Activated T-helper 1 cell treated with anti-CD3 and anti-CD28 coated beads, Interleukin-12 subunit alpha, Interleukin-12 subunit beta, Interleukin-2, Interleukin-4 antibody, amounts not matched to agents 30 ng/mL and 10 ng/mL and 1 ng/mL, durations not matched to agents 14 hours and 24 hours and 36 hours (primary cell): ENCODE measurements at regions of chrX and their contacts with region 1.

Region 1: GRCh38 chrX:135521405-135522189 is 1.1 kb downstream of the INTS6L start:
- DNase-seq: peak; percentile 78
- H3K4me3 Mint-ChIP-seq: peak overlapping the region; percentile 99
- H3K27ac Mint-ChIP-seq: peak overlapping the region; percentile 99
- H3K4me1 Mint-ChIP-seq: peaks cover 49% of the 10 kb centered on the region
- H3K27me3 Mint-ChIP-seq: no peaks in the 10 kb centered on the region

Region 2: DNA sequence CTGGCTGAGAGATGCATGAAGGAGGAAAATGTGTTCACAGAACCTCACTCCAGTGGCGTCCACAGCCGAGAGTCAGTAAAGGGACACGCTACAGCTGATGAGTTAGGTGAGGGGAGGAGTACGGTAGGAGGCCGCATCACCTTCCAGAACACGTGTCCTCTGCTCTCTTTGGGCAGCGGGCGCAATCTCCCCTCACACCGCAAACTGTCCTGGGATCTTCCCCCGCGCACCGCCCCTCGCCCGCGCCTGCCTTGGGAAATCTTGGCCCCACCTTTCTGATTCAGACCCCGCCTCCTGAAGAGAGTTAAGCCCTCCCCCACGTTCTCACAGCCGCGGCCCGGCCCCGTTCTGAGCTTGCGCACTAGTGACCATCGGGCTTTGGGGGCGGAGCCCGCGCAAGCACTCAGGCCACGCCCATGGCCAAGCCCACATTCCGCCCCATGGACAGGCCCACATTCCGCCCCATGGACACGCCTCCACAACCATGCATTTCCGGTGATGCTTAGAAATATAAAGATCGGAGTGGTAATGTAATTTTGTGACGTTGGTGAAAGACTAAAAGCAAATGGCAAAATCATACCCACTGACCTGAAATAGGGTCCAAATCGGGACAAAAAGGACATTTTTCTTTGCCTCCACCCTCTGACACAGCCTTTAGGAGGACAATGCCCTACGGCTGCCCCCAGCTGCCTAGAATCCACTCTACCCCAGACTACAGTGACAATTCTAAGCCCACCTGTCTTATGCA is 517.5 kb before region 1 on chrX:
- intact Hi-C with region 1: loop called (anchors 1 kb)
- DNase-seq: peak; percentile 87
- H3K4me3 Mint-ChIP-seq: peak overlapping the region; percentile 87
- H3K27ac Mint-ChIP-seq: peak overlapping the region; percentile 62
- H3K4me1 Mint-ChIP-seq: peaks cover 14% of the 10 kb centered on the region
- H3K27me3 Mint-ChIP-seq: peaks cover under 1% of the 10 kb centered on the region

Region 3: GRCh38 chrX:135421537-135421931 is 100.1 kb before region 1 on chrX:
- intact Hi-C with region 1: loop called (anchors 2 kb)
- DNase-seq: peak; percentile 82
- H3K4me3 Mint-ChIP-seq: peak overlapping the region; percentile 73
- H3K27ac Mint-ChIP-seq: peak overlapping the region; percentile 29
- H3K4me1 Mint-ChIP-seq: peaks cover 4% of the 10 kb centered on the region
- H3K27me3 Mint-ChIP-seq: peaks cover 18% of the 10 kb centered on the region

Region 4: GRCh38 chrX:135536877-135537276 is 15.3 kb after region 1 on chrX:
- intact Hi-C with region 1: loop called (anchors 2 kb)
- DNase-seq: no peak
- H3K4me3 Mint-ChIP-seq: no peak overlapping the region
- H3K27ac Mint-ChIP-seq: peak overlapping the region; percentile 83
- H3K4me1 Mint-ChIP-seq: peaks cover 39% of the 10 kb centered on the region
- H3K27me3 Mint-ChIP-seq: no peaks in the 10 kb centered on the region

Region 5: DNA sequence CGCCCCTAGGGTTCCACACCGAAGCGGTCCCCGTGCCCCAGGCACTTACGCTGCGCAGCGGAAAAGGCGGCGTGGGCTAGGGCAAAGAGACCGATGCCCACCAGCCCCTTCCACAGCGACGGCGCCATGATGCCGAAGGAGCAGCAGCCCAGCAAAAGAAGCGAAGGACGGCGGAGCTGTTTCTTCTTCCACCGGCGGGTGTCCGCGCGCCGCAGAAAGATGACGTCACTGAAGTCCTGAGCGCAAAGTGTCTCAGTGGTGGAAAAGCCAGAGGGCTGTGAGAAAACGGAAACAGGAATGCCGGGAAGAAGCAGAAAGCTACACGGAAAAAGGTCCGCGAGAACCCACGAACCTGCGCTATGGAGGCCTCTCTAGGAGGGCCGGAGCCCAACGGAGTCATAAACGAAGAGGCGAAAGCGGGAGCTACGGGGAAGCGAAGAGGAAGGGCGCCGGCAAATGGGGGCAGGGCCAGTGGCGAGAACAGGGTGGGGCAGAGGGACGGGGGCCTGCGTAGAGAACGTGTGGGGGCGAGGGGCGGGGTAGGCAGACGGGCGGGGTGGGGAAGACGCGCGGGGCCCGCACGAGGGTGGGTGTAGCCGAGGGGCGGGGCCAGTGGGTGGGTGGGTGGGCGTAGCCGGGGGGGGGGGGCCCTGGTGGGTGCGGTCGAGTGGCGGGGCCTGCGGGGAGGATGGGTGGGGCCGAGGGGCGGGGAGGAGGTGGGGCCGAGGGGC is 452.1 kb after region 1 on chrX and contains the start of gene MMGT1:
- intact Hi-C with region 1: loop called (anchors 1 kb)
- DNase-seq: peak; percentile 74
- H3K4me3 Mint-ChIP-seq: peak within 1 kb of the TSS; percentile 90
- H3K27ac Mint-ChIP-seq: peak within 1 kb of the TSS; percentile 91
- H3K4me1 Mint-ChIP-seq: peaks cover 40% of the 10 kb centered on the region
- H3K27me3 Mint-ChIP-seq: peaks cover 2% of the 10 kb centered on the region
- total RNA-seq, gene MMGT1: 25.2 and 26.4 TPM in 2 replicates

Region 6: GRCh38 chrX:136880452-136881013 is 1358.9 kb after region 1 on chrX and contains the start of gene RBMX:
- intact Hi-C with region 1: loop called (anchors 10 kb)
- DNase-seq: peak; percentile 84
- H3K4me3 Mint-ChIP-seq: peak within 1 kb of the TSS; percentile 98
- H3K27ac Mint-ChIP-seq: peak within 1 kb of the TSS; percentile 99
- H3K4me1 Mint-ChIP-seq: peaks cover 6% of the 10 kb centered on the region
- H3K27me3 Mint-ChIP-seq: no peaks in the 10 kb centered on the region
- total RNA-seq, gene RBMX: 308 and 327 TPM in 2 replicates